ENCODE measurements at regions of chr11 and their contacts with region 1.

Region 1: DNA sequence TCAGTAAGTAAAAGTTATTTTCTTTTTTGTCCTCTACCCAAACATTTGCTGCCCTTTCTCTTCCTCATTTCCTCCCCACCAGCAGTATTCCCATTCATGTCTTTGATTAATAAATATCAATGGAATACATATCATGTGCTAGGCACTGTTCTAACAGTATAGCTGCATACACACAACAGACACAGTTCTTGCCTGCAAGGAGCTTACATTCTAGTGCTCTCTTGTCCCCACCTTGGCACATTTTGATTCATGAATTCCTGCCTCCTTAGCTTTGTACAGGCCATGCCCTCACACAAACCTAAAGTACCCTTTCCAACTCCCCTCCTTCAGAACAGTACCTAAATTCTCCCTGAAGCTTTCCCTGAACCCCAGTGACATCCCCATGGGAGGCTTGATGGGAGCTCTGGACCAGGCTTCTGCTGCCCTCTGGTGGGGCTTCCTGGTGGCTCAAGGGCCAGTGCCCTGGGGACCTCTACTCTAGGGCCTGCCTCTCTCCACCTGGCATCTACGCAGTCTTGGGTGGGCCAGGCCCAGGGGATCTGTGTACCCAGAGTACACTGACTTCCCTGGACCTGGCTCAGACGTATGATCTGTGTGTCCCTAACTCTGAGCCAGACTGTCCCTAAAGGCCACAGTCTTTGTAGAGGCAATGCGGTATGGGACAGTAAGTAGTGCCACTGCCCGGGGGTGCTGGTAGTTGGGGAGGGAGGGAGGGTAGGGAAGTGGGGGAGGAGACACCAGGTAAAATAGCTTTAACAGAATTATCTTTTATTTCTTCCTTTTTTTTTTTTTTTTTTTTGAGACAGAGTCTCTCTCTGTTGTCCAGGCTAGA is 14.1 kb downstream of the RPS13 start:
- DNase-seq: peak; percentile 40 to 82
- ATAC-seq: peak; percentile 97

Region 2: DNA sequence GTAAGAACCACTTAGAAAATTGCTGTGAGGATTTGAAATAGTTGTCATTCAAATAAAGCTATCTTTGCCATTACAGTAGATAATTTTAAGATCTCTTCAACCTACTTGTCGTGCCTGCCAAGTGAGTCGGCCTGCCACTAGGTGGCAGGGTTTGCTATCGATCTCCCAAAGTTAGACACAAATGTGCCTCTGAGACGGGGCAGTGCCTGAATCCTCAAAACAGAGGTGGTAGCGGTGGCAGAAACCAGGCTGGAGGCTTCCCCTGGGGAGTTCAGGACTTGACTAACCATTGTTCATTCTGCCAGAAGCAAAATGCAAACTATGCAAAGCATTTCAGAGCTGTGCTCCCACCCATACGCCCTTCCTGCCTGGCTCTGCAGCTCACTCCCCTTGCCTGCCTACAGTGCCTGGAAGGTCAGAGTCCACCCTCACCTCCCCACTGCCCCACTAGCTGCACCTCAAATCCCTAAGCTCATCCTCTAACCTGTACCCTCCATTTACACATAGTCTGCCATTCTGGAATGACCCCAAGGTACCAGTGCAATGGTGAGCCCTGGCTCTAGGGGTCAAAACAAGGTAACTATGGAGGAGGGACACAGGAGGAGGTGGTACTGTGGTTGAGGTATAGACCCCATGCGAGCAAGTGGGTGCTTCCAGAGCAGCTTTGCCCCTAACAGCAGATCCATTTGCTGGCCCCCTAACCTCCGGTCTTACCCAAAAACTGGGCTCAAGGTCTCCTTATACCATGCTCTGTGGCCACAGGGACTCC is 242.9 kb before region 1 on chr11:
- intact Hi-C with region 1: loop called in 1 of 2 experiments (anchors 10 kb)
- DNase-seq: peak; percentile 68 to 84
- ATAC-seq: peak; percentile 76

Region 3: GRCh38 chr11:16945671-16946469 is 117.5 kb before region 1 on chr11:
- intact Hi-C with region 1: loop called (anchors 5 to 10 kb)
- DNase-seq: peak; percentile 61 to 71
- ATAC-seq: peak; percentile 96

Region 4: GRCh38 chr11:16997624-16998023 is 65.8 kb before region 1 on chr11:
- intact Hi-C with region 1: no loop called
- DNase-seq: peak; percentile 78 to 85
- ATAC-seq: peak; percentile 88